GM18951 (cell line): ENCODE measurements at regions of chr3 and their contacts with region 1.

Region 1: GRCh38 chr3:150538324-150539208 is 7.7 kb downstream of the SERP1 start:
- POLR2A ChIP-seq: no peak

Region 2: DNA sequence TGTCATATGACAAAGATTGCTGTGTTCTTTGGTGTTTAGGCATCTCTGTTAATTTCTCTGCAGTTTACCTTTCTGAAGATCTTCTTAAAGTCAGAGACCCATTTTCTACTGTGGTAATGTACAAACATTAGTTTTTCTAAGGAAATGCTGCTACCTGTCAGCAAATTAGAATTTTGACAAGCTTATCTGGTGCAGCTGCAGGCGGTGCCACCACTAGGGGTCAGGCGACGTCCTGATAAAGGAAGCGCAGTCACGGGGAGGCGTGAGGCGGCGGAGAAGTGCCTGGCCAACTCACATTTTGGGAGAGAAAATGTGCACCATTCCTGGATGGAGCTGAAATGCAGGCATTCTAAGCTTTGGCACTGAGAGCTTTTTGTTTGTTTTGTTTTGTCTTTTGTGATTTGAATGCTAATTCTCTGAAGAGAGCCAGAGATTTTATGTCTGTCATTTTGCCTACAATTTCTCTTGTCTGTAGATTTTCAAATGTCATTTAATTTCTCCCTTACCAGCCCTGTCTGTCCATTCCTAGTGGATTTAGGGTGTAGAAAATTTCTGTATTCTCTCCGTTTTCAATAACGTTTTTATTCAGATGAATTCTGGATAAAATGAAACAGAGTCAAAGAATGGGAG is 249.3 kb after region 1 on chr3:
- in situ Hi-C with region 1: no loop called
- POLR2A ChIP-seq: no peak

Region 3: GRCh38 chr3:150844500-150844899 is 305.9 kb after region 1 on chr3:
- in situ Hi-C with region 1: no loop called
- POLR2A ChIP-seq: no peak

Region 4: GRCh38 chr3:150868282-150868681 is 329.7 kb after region 1 on chr3:
- in situ Hi-C with region 1: loop called (anchors 10 kb)
- POLR2A ChIP-seq: no peak